Activated naive CD4-positive, alpha-beta T cell treated with anti-CD3 and anti-CD28 coated beads for 36 hours (primary cell): ENCODE measurements at regions of chr1 and their contacts with region 1.

Region 1: DNA sequence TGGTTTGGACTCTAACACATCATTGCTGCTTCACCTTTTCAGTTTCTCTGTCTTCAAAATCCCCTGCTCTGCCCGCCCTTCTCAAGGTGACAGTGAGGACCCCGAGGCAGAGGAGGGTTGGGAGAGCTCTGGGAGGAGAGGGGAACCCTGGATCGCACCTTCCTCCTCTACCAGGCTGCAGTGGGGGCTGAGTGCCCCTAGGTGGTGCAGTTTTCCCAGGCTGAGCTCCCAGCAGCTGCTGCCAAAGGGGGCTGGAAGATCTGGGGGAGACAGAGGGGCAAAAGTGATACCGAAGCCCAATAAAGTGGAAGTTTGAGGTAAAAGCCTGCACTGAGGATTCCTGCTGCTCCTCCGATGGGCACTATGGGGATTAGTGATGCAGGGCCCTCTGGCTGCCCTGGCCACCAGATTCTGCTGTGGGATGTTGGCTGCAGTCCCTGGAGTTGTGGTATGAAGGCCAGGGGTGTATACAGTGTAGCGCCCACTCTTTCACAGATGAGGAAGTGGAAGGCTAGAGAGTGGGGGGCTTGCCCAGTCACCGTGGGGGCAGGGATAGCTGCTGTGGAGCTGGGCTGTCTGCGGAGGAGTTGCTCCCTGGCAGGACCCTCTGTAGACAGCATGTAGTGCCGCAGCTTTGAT is 40.7 kb upstream of the SCMH1 start:
- DNase-seq: peak; percentile 43
- H3K4me3 Mint-ChIP-seq: no peak overlapping the region
- H3K27ac Mint-ChIP-seq: no peak overlapping the region
- H3K4me1 Mint-ChIP-seq: no peaks in the 10 kb centered on the region
- H3K27me3 Mint-ChIP-seq: peaks cover 28% of the 10 kb centered on the region

Region 2: GRCh38 chr1:40919475-40920011 is 363.3 kb before region 1 on chr1:
- CTCF ChIA-PET with region 1: no interaction called
- intact Hi-C with region 1: no loop called
- DNase-seq: no peak
- H3K4me3 Mint-ChIP-seq: no peak overlapping the region
- H3K27ac Mint-ChIP-seq: no peak overlapping the region
- H3K4me1 Mint-ChIP-seq: no peaks in the 10 kb centered on the region
- H3K27me3 Mint-ChIP-seq: no peaks in the 10 kb centered on the region

Region 3: DNA sequence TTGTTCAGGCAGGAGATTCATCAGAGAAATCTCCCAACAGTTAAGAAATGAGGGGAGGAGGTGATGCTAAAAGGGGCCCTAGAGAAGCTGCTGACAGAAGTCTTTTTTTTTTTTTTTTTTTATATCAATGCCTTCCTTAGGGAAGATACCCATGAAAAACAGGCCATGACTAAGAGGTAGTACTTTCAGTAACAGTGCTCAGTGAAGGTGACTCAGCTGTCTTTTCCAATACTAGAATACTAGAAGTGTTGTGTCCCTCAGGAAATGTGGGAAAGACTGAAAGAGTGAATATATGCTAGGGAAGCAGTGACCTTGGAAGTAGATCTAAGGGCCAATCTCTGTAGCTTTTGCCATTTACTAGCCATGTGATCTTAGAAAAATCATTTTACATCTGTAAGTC is 208.8 kb before region 1 on chr1:
- CTCF ChIA-PET with region 1: no interaction called
- intact Hi-C with region 1: no loop called
- DNase-seq: no peak
- H3K4me3 Mint-ChIP-seq: no peak overlapping the region
- H3K27ac Mint-ChIP-seq: no peak overlapping the region
- H3K4me1 Mint-ChIP-seq: peaks cover 3% of the 10 kb centered on the region
- H3K27me3 Mint-ChIP-seq: no peaks in the 10 kb centered on the region

Region 4: GRCh38 chr1:41313661-41314131 is 30.9 kb after region 1 on chr1:
- CTCF ChIA-PET with region 1: interaction called, 13 read pairs
- intact Hi-C with region 1: no loop called
- DNase-seq: peak; percentile 13
- H3K4me3 Mint-ChIP-seq: no peak overlapping the region
- H3K27ac Mint-ChIP-seq: no peak overlapping the region
- H3K4me1 Mint-ChIP-seq: no peaks in the 10 kb centered on the region
- H3K27me3 Mint-ChIP-seq: no peaks in the 10 kb centered on the region

Region 5: DNA sequence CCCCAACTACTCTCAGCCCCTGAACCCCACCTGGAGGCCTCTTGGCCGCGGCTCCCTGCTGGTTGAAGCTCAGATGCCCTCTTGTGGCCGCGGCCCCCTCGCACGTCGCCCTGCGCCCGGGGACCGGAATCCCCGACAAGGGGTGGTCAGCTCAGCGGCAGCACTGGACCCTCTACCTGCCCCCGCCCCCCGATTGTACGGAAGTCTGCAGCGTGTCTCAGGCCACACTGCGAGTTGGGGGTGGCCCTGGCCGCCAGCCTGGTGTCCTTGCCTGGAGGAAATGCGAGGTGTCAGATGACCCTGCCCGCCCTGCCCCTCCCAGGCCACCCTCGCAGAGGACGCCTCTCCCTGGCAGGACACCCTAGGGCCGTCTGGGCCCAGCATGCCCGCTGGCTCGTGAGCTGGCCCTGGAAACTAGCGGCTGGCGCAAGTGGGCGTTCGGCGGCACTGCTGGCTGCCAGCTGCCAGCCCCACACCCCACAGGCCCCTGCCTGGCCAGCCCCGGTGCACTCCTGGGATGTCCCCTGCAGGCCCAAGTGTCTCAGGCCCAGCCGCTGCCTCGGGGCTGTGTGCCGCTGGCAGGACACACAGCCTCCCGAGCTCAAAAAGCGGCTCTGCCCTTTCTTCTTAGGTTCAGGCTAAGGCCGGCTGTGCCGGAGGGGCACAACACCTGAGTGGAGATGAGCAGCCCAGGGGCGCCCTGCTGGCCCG is 140.9 kb after region 1 on chr1:
- CTCF ChIA-PET with region 1: interaction called, 47 read pairs
- intact Hi-C with region 1: no loop called
- DNase-seq: no peak
- H3K4me3 Mint-ChIP-seq: no peak overlapping the region
- H3K27ac Mint-ChIP-seq: no peak overlapping the region
- H3K4me1 Mint-ChIP-seq: no peaks in the 10 kb centered on the region
- H3K27me3 Mint-ChIP-seq: no peaks in the 10 kb centered on the region